Activated CD4-positive, alpha-beta memory T cell treated with anti-CD3 and anti-CD28 coated beads for 36 hours (primary cell): ENCODE measurements at regions of chr11 and their contacts with region 1.

Region 1: GRCh38 chr11:22554221-22554620 is 71.4 kb downstream of the FANCF start:
- DNase-seq: no peak
- H3K4me3 Mint-ChIP-seq: no peak overlapping the region
- H3K27ac Mint-ChIP-seq: no peak overlapping the region
- H3K4me1 Mint-ChIP-seq: no peaks in the 10 kb centered on the region
- H3K27me3 Mint-ChIP-seq: peaks cover 7% of the 10 kb centered on the region

Region 2: GRCh38 chr11:22337596-22338485 is 216.4 kb before region 1 on chr11 and contains the start of gene SLC17A6:
- CTCF ChIA-PET with region 1: no interaction called
- POLR2A ChIA-PET with region 1: no interaction called
- intact Hi-C with region 1: loop called (anchors 10 kb)
- DNase-seq: peak; percentile 18
- H3K4me3 Mint-ChIP-seq: no peak within 1 kb of the TSS
- H3K27ac Mint-ChIP-seq: no peak within 1 kb of the TSS
- H3K4me1 Mint-ChIP-seq: peaks cover 12% of the 10 kb centered on the region
- H3K27me3 Mint-ChIP-seq: peaks cover 54% of the 10 kb centered on the region
- total RNA-seq, gene SLC17A6: not detected

Region 3: DNA sequence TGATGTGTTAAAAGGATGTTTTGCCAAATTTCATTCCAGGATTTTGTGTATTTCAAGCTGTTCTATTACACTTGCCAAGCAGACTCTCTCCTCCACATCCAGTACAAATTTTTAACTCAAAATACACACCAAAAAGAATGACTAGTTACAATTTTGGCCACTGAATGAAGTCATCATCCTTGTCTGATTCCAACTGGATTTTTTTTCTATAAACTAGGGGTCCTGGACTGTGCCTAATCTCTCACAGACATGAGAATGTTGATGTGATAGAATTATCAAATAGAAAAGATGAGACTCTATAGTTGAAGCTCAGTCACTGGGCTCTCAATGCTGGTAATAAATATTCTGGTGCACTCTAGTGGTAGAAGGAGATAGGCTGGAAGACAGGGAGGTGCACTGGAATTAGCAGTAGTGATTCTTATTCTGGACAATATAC is 14.4 kb before region 1 on chr11:
- CTCF ChIA-PET with region 1: no interaction called
- POLR2A ChIA-PET with region 1: no interaction called
- intact Hi-C with region 1: no loop called
- DNase-seq: no peak
- H3K4me3 Mint-ChIP-seq: no peak overlapping the region
- H3K27ac Mint-ChIP-seq: no peak overlapping the region
- H3K4me1 Mint-ChIP-seq: no peaks in the 10 kb centered on the region
- H3K27me3 Mint-ChIP-seq: peaks cover 9% of the 10 kb centered on the region

Region 4: GRCh38 chr11:22884217-22884616 is 330.0 kb after region 1 on chr11:
- CTCF ChIA-PET with region 1: no interaction called
- POLR2A ChIA-PET with region 1: no interaction called
- intact Hi-C with region 1: no loop called
- DNase-seq: no peak
- H3K4me3 Mint-ChIP-seq: no peak overlapping the region
- H3K27ac Mint-ChIP-seq: no peak overlapping the region
- H3K4me1 Mint-ChIP-seq: no peaks in the 10 kb centered on the region
- H3K27me3 Mint-ChIP-seq: no peaks in the 10 kb centered on the region